Activated T-helper 1 cell treated with anti-CD3 and anti-CD28 coated beads, Interleukin-12 subunit alpha, Interleukin-12 subunit beta, Interleukin-2, Interleukin-4 antibody, amounts not matched to agents 30 ng/mL and 10 ng/mL and 1 ng/mL, durations not matched to agents 14 hours and 24 hours and 36 hours (primary cell): ENCODE measurements at regions of chrX and their contacts with region 1.

Region 1: DNA sequence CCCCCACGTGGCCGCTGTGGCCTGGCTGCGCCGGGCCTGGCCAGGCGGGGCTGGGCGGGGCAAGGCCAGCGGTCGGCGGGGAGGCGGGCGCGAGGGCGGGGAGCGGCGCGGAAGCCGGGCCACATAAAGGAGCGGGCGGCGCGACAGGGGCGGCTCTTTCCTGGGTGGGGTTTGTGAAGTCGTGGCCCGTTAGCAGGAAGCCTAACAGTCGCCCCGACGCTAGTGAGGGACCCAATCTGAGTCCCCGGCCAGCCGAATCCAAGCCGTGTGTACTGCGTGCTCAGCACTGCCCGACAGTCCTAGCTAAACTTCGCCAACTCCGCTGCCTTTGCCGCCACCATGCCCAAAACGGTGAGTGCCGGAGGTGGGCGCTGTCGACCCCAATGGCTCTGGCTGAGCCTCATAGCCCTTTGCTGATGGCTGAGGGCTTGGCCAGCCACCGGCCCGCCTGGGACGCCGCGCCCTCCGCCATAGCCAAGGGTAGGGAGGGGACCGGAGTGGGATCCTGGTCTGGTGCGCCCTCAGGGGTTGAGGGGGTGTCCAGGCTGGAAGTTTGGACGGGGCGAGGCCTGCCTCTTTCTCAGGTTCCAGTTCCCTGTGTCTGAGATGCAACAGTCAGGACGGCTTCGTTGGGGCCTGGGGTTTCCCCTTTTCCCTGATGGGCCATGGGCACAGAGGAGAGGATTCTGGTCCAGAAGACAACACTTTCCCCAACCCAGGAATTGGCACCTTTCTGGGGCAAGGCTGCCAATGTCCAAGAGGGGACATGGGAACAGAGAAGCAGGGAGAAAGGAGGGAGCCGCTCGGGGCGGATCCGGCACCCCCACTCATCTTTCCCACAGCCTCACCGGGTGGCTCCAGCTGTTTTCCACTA is at the start of gene MSN:
- DNase-seq: peak; percentile 74
- H3K4me3 Mint-ChIP-seq: peak within 1 kb of the TSS; percentile 98
- H3K27ac Mint-ChIP-seq: peak within 1 kb of the TSS; percentile 97
- H3K4me1 Mint-ChIP-seq: peaks cover 43% of the 10 kb centered on the region
- H3K27me3 Mint-ChIP-seq: no peaks in the 10 kb centered on the region
- total RNA-seq, gene MSN: 479 and 484 TPM in 2 replicates

Region 2: GRCh38 chrX:65607070-65607742 is 60.5 kb before region 1 on chrX:
- intact Hi-C with region 1: loop called (anchors 2 kb)
- DNase-seq: no peak
- H3K4me3 Mint-ChIP-seq: peak overlapping the region; percentile 24
- H3K27ac Mint-ChIP-seq: peak overlapping the region; percentile 86
- H3K4me1 Mint-ChIP-seq: peaks cover 54% of the 10 kb centered on the region
- H3K27me3 Mint-ChIP-seq: no peaks in the 10 kb centered on the region

Region 3: GRCh38 chrX:66015152-66015831 is 347.6 kb after region 1 on chrX:
- intact Hi-C with region 1: no loop called
- DNase-seq: peak; percentile 15
- H3K4me3 Mint-ChIP-seq: peak overlapping the region; percentile 65
- H3K27ac Mint-ChIP-seq: peak overlapping the region; percentile 87
- H3K4me1 Mint-ChIP-seq: peaks cover 88% of the 10 kb centered on the region
- H3K27me3 Mint-ChIP-seq: no peaks in the 10 kb centered on the region